PC-9 (cell line): ENCODE measurements at regions of chr1 and their contacts with region 1.

Region 1: GRCh38 chr1:20035114-20035513 is 34.9 kb upstream of the PLA2G5 start:
- DNase-seq: no peak
- H3K4me3 ChIP-seq: no peak overlapping the region
- H3K27ac ChIP-seq: no peak overlapping the region
- H3K4me1 ChIP-seq: no peaks in the 10 kb centered on the region
- H3K27me3 ChIP-seq: no peaks in the 10 kb centered on the region
- CTCF ChIP-seq: no peak

Region 2: GRCh38 chr1:20008391-20008841 is 26.7 kb before region 1 on chr1:
- CTCF ChIA-PET with region 1: interaction called, 13 read pairs
- POLR2A ChIA-PET with region 1: no interaction called
- intact Hi-C with region 1: no loop called
- DNase-seq: no peak
- H3K4me3 ChIP-seq: no peak overlapping the region
- H3K27ac ChIP-seq: no peak overlapping the region
- H3K4me1 ChIP-seq: no peaks in the 10 kb centered on the region
- H3K27me3 ChIP-seq: no peaks in the 10 kb centered on the region
- CTCF ChIP-seq: no peak